H1 (cell line): ENCODE measurements at regions of chr1 and their contacts with region 1.

Region 1: DNA sequence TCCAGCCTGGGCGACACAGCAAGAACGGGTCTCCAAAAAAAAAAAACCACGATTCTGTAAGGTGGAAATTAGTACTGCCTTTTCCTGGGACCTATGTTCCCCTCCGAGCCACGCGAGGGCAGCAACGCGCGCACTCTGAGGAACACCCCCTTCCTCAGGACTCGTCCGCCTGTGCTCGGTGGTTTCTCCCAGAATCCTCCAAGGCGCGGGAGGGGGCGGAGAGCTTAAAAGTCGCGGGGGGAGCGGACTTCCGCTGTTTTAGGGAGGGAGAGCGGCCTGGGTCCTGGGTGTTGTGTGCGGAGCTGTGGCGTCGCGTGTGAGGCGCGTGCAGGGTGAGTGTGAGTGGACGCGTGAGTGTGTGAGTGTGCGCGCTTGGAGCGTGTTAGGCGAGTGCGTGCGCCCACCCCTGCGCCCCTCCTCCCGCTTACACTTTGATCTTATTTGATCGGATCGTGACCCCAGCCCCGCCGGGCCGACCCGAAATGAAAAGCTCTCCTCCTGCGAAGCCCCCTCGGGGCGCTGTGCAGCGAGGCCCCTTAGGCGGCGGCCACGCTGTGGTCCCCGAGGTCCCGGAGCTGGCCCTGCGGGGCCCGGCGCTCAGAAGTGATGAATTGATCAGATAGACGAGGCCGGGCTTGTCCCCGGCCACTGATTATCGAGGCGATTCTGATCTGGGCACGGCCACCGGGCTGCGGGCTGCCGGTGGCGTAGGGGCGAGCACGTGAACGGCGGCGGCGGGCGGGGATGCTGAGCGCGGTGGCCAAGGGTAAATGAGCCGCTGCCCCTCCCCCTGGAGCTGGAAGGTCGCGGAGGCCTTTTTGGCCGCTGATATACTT is 9.6 kb downstream of the TMEM167B start:
- DNase-seq: peak; percentile 95 to 97
- H3K4me3 ChIP-seq: peak overlapping the region; percentile 69 to 91 (median 86)
- H3K27ac ChIP-seq: peak overlapping the region; percentile 95
- H3K4me1 ChIP-seq: no peaks in the 10 kb centered on the region
- H3K27me3 ChIP-seq: no peaks in the 10 kb centered on the region
- CTCF ChIP-seq: peak; percentile 82 to 92 (median 87)
- EP300 ChIP-seq: peak in 1 of 2 experiments; percentile 83; a peak in 1 of 3 replicates
- POLR2A ChIP-seq: peak; percentile 99 to 100
- RAD21 ChIP-seq: peak; percentile 44 to 57; a peak in 3 of 4 replicates

Region 2: GRCh38 chr1:108947871-108948525 is 152.2 kb before region 1 on chr1:
- CTCF ChIA-PET with region 1: no interaction called
- POLR2A ChIA-PET with region 1: interaction called, 13 read pairs
- DNase-seq: no peak
- H3K4me3 ChIP-seq: peak overlapping the region in 1 of 4 experiments; percentile 47; a peak in 3 of 8 replicates
- H3K27ac ChIP-seq: peak overlapping the region; percentile 80
- H3K4me1 ChIP-seq: peaks cover 4 to 12% (median 7%) of the 10 kb centered on the region in 4 experiments; a peak in 5 of 7 replicates
- H3K27me3 ChIP-seq: no peaks in the 10 kb centered on the region
- CTCF ChIP-seq: no peak
- EP300 ChIP-seq: no peak
- POLR2A ChIP-seq: no peak
- RAD21 ChIP-seq: no peak

Region 3: GRCh38 chr1:109027841-109028240 is 72.3 kb before region 1 on chr1:
- CTCF ChIA-PET with region 1: no interaction called
- POLR2A ChIA-PET with region 1: no interaction called
- DNase-seq: no peak
- H3K4me3 ChIP-seq: no peak overlapping the region
- H3K27ac ChIP-seq: no peak overlapping the region
- H3K4me1 ChIP-seq: no peaks in the 10 kb centered on the region
- H3K27me3 ChIP-seq: no peaks in the 10 kb centered on the region
- CTCF ChIP-seq: no peak
- EP300 ChIP-seq: no peak
- POLR2A ChIP-seq: no peak
- RAD21 ChIP-seq: no peak

Region 4: GRCh38 chr1:109059026-109059425 is 41.1 kb before region 1 on chr1:
- CTCF ChIA-PET with region 1: no interaction called
- POLR2A ChIA-PET with region 1: interaction called, 10 read pairs
- DNase-seq: no peak
- H3K4me3 ChIP-seq: no peak overlapping the region
- H3K27ac ChIP-seq: no peak overlapping the region
- H3K4me1 ChIP-seq: no peaks in the 10 kb centered on the region
- H3K27me3 ChIP-seq: no peaks in the 10 kb centered on the region
- CTCF ChIP-seq: no peak
- EP300 ChIP-seq: no peak
- POLR2A ChIP-seq: no peak
- RAD21 ChIP-seq: no peak

Region 5: GRCh38 chr1:109083923-109084322 is 16.2 kb before region 1 on chr1:
- CTCF ChIA-PET with region 1: interaction called, 20 read pairs
- POLR2A ChIA-PET with region 1: interaction called, 99 read pairs
- DNase-seq: no peak
- H3K4me3 ChIP-seq: no peak overlapping the region
- H3K27ac ChIP-seq: no peak overlapping the region
- H3K4me1 ChIP-seq: peaks cover 0 to 7% (median 3%) of the 10 kb centered on the region in 4 experiments; a peak in 4 of 7 replicates
- H3K27me3 ChIP-seq: no peaks in the 10 kb centered on the region
- CTCF ChIP-seq: no peak
- EP300 ChIP-seq: no peak
- POLR2A ChIP-seq: no peak
- RAD21 ChIP-seq: no peak

Region 6: DNA sequence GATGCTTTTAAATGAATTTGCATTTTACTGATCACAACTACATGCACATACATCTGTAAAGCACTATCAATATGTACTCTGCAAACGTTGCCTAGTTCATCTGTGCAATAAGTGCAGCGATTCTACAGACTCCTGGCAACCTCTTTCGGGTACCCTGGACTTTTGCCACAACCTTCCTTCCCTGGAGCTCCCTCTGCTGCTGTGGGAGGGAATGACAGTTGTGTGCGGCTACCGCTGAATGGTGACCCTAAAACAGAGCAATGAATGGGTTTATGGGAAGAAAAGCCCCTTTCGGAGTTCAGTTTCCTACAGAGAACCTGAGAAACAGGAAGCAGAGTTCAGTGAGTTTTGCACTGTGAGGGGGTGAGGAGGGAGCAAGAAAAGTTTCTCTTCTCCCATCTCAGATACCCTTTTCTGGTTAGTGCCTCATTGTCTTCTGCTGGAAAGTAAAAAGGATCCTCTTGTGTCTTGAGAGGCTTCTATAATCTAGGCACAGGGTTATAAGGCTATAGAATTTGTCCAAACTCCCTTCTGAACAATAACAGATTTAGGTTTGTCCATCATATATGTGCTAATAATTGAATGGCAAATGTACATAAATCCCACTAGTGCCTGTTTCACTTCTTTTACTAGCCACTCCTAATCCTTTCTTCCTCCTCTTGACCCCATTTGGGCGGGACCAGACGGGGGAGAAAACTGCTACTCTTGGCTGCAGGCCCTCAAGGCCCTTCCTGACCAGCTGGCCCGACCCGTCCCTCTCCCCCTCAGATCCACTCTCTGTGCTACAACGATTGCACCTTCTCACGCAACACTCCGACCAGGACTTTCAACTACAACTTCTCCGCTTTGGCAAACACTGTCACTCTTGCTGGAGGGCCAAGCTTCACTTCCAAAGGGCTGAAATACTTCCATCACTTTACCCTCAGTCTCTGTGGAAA is 93.8 kb after region 1 on chr1:
- CTCF ChIA-PET with region 1: interaction called, 12 read pairs
- POLR2A ChIA-PET with region 1: interaction called, 6 read pairs
- DNase-seq: peak in 1 of 2 experiments; percentile 92
- H3K4me3 ChIP-seq: no peak overlapping the region
- H3K27ac ChIP-seq: no peak overlapping the region
- H3K4me1 ChIP-seq: peaks cover 0 to 2% (median 0%) of the 10 kb centered on the region in 4 experiments; a peak in 1 of 7 replicates
- H3K27me3 ChIP-seq: no peaks in the 10 kb centered on the region
- CTCF ChIP-seq: peak; percentile 79 to 87 (median 84)
- EP300 ChIP-seq: no peak
- POLR2A ChIP-seq: no peak
- RAD21 ChIP-seq: peak; percentile 74 to 84